Caco-2 (cell line): ENCODE measurements at regions of chr12 and their contacts with region 1.

Region 1: GRCh38 chr12:76348079-76348901 is at the start of gene BBS10:
- DNase-seq: peak; percentile 91
- H3K4me3 ChIP-seq: peak within 1 kb of the TSS; percentile 57
- H3K4me3 Mint-ChIP-seq: peak within 1 kb of the TSS; percentile 82
- H3K27ac Mint-ChIP-seq: peak within 1 kb of the TSS; percentile 83
- H3K4me1 ChIP-seq: peaks cover 5% of the 10 kb centered on the region; the same call in 1 of the 2 replicates
- H3K4me1 Mint-ChIP-seq: peaks cover 9% of the 10 kb centered on the region
- H3K27me3 ChIP-seq: no peaks in the 10 kb centered on the region; the same call in 1 of the 2 replicates
- H3K27me3 Mint-ChIP-seq: no peaks in the 10 kb centered on the region
- CTCF ChIP-seq: peak; percentile 40 to 63
- total RNA-seq, gene BBS10: 6.0 and 6.3 TPM in 2 replicates

Region 2: DNA sequence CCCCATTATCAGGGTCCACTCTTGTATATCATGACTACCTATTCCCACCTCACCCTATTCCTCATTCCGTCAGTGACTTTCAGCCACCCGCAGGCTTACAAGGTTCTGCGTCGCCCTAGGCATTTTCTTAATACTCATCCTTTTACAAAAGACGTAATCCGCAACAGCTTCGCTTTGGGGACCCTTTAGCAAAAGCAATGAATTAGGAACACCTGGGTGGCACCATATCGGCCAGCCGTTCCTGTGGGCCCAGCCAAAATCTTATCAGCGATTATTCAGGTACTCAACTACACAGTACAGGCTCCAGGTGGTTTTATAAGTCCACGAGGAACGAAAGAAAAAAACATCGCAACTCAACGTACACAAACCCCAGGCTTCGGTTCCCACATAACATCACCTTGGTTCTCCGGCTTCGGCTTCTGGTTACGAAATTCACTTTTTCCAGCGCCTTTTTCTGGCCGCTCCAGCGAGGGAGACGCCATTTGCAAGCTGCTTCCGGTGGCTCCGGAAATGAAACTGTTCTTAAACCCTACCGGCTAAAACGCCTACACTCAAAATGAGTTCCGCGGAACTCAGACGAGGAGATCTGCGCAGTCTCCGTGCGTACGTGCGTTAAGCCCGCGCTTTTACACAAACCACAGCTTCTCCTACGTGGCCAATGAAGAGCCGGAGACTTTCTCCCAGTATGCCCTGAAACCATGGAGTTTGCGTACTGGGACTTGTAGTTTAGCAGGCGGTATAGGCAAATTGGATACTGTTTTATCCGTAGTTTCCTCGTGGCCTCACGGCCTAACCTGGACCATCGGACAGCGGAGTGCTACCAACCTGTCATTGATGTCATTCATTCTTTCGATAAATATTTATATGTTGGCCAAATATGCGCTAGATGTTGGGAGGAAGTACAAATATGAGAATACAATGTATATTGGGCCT is 836.9 kb before region 1 on chr12 and contains the start of gene KRR1:
- CTCF ChIA-PET with region 1: no interaction called
- POLR2A ChIA-PET with region 1: no interaction called
- intact Hi-C with region 1: loop called (anchors 5 kb)
- DNase-seq: peak; percentile 92 to 96
- H3K4me3 ChIP-seq: peak within 1 kb of the TSS; percentile 77
- H3K4me3 Mint-ChIP-seq: peak within 1 kb of the TSS; percentile 100
- H3K27ac Mint-ChIP-seq: peak within 1 kb of the TSS; percentile 99
- H3K4me1 ChIP-seq: 0 out of 2 replicates have a peak, but pooled peaks cover 10% of the 10 kb centered on the region
- H3K4me1 Mint-ChIP-seq: no peaks in the 10 kb centered on the region
- H3K27me3 ChIP-seq: no peaks in the 10 kb centered on the region
- H3K27me3 Mint-ChIP-seq: no peaks in the 10 kb centered on the region
- CTCF ChIP-seq: no peak
- total RNA-seq, gene KRR1: 73.0 and 73.2 TPM in 2 replicates

Region 3: GRCh38 chr12:75623631-75624118 is 724.6 kb before region 1 on chr12:
- CTCF ChIA-PET with region 1: no interaction called
- POLR2A ChIA-PET with region 1: no interaction called
- intact Hi-C with region 1: loop called (anchors 2 kb)
- DNase-seq: peak; percentile 46 to 50
- H3K4me3 ChIP-seq: no peak overlapping the region
- H3K4me3 Mint-ChIP-seq: no peak overlapping the region
- H3K27ac Mint-ChIP-seq: peak overlapping the region; percentile 76
- H3K4me1 ChIP-seq: peaks cover 17% of the 10 kb centered on the region
- H3K4me1 Mint-ChIP-seq: peaks cover 20% of the 10 kb centered on the region
- H3K27me3 ChIP-seq: no peaks in the 10 kb centered on the region
- H3K27me3 Mint-ChIP-seq: no peaks in the 10 kb centered on the region
- CTCF ChIP-seq: peak; percentile 20 to 51

Region 4: GRCh38 chr12:76083904-76084862 is 264.1 kb before region 1 on chr12 and contains the start of gene NAP1L1:
- CTCF ChIA-PET with region 1: interaction called, 4 read pairs
- POLR2A ChIA-PET with region 1: interaction called, 3 read pairs
- intact Hi-C with region 1: loop called (anchors 1 kb)
- DNase-seq: peak; percentile 96 to 98
- H3K4me3 ChIP-seq: peak within 1 kb of the TSS; percentile 78
- H3K4me3 Mint-ChIP-seq: peak within 1 kb of the TSS; percentile 96
- H3K27ac Mint-ChIP-seq: peak within 1 kb of the TSS; percentile 99
- H3K4me1 ChIP-seq: peaks cover 15% of the 10 kb centered on the region
- H3K4me1 Mint-ChIP-seq: peaks cover 26% of the 10 kb centered on the region
- H3K27me3 ChIP-seq: no peaks in the 10 kb centered on the region
- H3K27me3 Mint-ChIP-seq: no peaks in the 10 kb centered on the region
- CTCF ChIP-seq: peak in 1 of 2 experiments; percentile 5
- total RNA-seq, gene NAP1L1: 696 and 711 TPM in 2 replicates

Region 5: DNA sequence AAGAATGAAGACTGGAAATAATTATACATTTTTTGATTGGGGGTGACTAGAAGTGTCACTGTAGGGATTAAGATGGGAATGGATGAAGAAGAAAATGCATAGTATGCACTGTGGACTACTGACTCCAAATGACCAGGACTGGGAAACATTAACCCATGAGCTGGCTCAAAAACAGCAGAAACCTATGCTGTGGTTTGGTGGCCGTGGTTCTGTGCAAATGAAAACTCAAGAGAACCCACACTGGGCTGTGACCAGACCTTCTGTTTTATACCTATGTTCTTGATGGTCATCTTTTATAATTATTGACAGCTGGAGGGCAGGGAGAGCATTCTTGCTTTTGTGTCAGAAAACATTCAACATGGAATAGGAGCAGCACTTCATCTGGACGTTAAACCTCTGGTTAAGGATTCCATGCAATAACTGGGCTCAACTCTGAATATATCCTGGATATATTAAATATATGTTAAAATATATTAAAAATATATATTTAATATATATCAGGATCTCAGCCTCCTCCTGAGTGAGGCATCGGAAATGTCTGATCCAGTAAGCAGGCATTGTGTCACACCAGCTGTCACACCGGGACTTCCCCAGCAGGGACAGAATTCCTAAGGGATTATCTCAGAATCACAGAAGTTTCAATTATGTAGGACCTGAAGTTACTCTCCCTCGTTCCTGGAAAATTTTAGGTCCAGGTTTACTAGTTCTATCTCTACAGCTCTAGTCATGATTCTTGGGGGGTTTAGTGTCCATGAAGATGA is 48.6 kb before region 1 on chr12:
- CTCF ChIA-PET with region 1: no interaction called
- POLR2A ChIA-PET with region 1: no interaction called
- intact Hi-C with region 1: no loop called
- DNase-seq: peak in 1 of 2 experiments; percentile 35
- H3K4me3 ChIP-seq: no peak overlapping the region
- H3K4me3 Mint-ChIP-seq: no peak overlapping the region
- H3K27ac Mint-ChIP-seq: peak overlapping the region; percentile 36
- H3K4me1 ChIP-seq: peaks cover 10% of the 10 kb centered on the region; the same call in 1 of the 2 replicates
- H3K4me1 Mint-ChIP-seq: no peaks in the 10 kb centered on the region
- H3K27me3 ChIP-seq: no peaks in the 10 kb centered on the region
- H3K27me3 Mint-ChIP-seq: no peaks in the 10 kb centered on the region
- CTCF ChIP-seq: peak; percentile 14 to 24

Region 6: DNA sequence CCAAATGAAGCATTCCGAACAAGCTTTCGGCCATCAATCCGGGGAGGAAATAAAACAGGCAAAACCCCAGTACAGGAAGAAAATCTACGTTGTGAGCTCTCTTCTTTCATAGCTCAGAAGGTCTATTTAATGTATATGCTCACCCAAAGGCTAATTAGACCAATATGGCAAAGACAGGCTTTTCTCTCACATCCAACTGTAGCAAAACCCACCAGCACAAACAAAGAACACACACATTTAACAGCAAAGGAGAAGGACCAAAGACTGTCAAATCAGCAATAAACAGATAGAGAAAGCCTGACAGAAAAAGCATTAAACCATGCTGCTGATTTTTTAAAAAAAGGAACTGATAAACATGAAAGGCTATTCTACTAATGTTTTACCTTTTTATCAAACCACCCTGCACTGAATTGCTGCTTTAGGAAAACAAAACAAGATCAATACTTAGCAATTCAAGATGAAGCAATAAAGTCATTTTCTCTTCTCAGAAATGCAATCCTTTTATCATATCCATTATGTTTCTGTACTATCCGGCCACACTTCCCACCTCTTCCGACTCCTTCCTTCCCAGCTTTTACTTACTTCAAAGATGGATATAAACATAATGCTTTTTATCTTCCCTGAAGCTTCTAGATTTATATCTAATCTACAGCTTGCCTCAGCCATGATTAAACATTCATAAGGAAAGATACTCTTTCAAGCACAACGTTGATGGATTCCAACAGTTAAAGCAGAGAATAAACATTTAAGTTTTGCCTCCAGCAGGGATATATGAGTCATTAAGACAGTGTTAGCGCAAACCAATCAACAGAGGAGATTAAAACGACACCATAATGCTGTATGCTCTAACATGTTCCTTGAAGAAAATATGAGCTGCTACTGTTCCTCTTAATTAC is 74.5 kb after region 1 on chr12:
- CTCF ChIA-PET with region 1: no interaction called
- POLR2A ChIA-PET with region 1: no interaction called
- intact Hi-C with region 1: no loop called
- DNase-seq: peak; percentile 22 to 35
- H3K4me3 ChIP-seq: peak overlapping the region; percentile 12; the same call in 1 of the 2 replicates
- H3K4me3 Mint-ChIP-seq: peak overlapping the region; percentile 64
- H3K27ac Mint-ChIP-seq: peak overlapping the region; percentile 67
- H3K4me1 ChIP-seq: peaks cover 24% of the 10 kb centered on the region
- H3K4me1 Mint-ChIP-seq: peaks cover 21% of the 10 kb centered on the region
- H3K27me3 ChIP-seq: no peaks in the 10 kb centered on the region
- H3K27me3 Mint-ChIP-seq: no peaks in the 10 kb centered on the region
- CTCF ChIP-seq: no peak

Region 7: GRCh38 chr12:76455582-76456345 is 107.5 kb after region 1 on chr12:
- CTCF ChIA-PET with region 1: interaction called, 17 read pairs
- POLR2A ChIA-PET with region 1: no interaction called
- intact Hi-C with region 1: loop called (anchors 1 kb)
- DNase-seq: peak in 1 of 2 experiments; percentile 67
- H3K4me3 ChIP-seq: no peak overlapping the region
- H3K4me3 Mint-ChIP-seq: no peak overlapping the region
- H3K27ac Mint-ChIP-seq: peak overlapping the region; percentile 67
- H3K4me1 ChIP-seq: peaks cover 13% of the 10 kb centered on the region
- H3K4me1 Mint-ChIP-seq: peaks cover 13% of the 10 kb centered on the region
- H3K27me3 ChIP-seq: no peaks in the 10 kb centered on the region
- H3K27me3 Mint-ChIP-seq: no peaks in the 10 kb centered on the region
- CTCF ChIP-seq: peak; percentile 48 to 72

Region 8: DNA sequence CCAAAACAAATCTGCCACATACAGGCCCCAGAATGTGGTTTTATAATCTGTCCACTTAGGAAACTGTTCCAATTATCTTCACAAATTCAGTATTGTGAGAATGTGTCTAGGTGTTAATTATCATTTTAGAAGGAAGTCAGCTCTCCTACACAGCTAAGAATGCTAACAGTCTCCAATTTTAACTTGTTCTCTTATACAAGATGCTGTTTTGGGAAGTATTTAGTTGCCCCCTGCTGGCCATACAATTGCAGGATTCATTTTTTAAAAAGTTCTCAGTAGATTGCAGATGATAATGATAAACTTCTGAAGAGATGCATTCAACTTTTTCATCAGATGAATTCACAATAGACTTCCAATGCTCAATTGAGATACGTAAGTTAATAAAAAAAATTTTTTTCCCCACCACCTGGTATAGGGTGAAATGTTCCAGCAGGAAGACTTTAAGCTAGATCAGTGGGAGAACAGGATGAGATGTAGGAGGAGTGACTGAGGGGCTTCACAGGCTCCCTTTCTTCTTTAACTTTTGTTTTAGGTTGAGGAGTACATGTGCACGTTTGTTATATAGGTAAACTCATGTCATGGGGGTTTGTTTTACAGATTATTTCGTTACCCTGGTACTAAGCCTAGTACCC is 238.6 kb after region 1 on chr12:
- CTCF ChIA-PET with region 1: no interaction called
- POLR2A ChIA-PET with region 1: no interaction called
- intact Hi-C with region 1: loop called (anchors 2 kb)
- DNase-seq: peak in 1 of 2 experiments; percentile 33
- H3K4me3 ChIP-seq: no peak overlapping the region
- H3K4me3 Mint-ChIP-seq: no peak overlapping the region
- H3K27ac Mint-ChIP-seq: no peak overlapping the region
- H3K4me1 ChIP-seq: 0 out of 2 replicates have a peak, but pooled peaks cover 4% of the 10 kb centered on the region
- H3K4me1 Mint-ChIP-seq: peaks cover 6% of the 10 kb centered on the region
- H3K27me3 ChIP-seq: no peaks in the 10 kb centered on the region
- H3K27me3 Mint-ChIP-seq: no peaks in the 10 kb centered on the region
- CTCF ChIP-seq: peak; percentile 57 to 66